RWPE1 (cell line): ENCODE measurements at regions of chr3 and their contacts with region 1.

Region 1: DNA sequence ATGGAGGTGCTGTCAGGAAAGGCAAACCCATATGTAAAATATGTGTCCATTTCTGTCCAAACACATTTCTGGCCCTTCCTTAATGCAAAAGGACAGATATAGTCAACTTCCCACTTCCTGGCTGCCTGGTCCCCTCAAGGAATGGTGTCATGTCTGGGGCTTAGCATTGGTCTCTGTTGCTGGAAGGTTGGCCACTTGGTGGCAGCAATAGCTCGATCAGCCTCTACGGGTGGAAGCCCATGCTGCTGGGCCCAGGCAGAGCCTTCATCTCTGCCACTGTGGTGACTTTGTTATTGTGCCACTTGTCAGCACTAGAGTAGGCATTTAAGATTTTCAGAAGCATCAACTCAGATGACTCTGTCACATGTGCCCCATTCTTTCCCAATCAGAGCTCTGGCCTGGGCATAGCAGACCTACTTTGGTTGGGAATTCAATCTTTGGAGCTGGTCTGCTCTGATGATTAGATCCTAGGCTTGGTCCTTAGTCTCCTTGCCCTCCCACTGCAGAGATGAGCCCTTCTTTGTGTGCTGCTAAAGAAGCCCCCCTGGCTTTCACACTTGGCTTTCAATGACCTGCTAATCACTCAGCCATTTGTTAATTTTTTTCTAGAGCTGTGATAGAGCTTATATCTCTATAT is 51.0 kb upstream of the SPSB4 start:
- DNase-seq: peak; percentile 33
- H3K27ac ChIP-seq: no peak overlapping the region
- CTCF ChIP-seq: peak; percentile 43

Region 2: DNA sequence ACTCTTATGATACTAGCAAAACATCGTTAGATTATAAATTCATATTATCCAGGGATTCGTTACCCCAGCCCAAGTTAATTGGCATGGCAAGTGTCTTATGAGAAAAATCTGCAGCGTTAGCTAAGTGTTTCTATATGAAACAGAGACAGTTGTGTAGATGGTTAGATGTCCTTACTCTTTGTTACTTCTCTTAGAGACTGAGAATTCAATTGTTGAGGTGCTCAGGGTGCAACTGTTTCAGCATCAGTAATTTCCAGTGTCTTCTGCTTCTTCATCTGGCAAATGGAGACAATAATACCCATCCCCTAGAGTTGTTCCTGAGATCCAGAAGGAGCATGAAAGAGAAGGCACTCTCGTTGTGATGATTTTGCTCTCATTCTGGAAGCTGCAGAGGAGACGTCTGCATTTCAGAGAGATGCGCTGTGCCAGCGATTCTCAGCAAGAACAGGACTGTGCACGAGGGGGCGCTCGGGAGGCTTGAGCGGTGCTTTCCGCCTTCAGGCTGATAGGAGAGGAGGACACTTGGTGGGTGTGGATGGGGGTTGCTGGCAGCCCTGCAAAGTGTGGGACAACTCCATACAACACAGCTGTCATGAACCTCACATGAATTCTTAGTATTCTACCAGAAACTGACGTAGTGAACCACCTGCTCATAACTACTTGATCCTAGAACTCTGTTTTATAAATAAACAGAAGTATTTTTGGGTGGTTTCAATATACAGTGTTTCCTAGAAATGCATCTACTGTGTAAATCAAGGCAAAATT is 11.3 kb after region 1 on chr3:
- CTCF ChIA-PET with region 1: interaction called, 12 read pairs
- POLR2A ChIA-PET with region 1: no interaction called
- DNase-seq: peak; percentile 37
- H3K27ac ChIP-seq: no peak overlapping the region
- CTCF ChIP-seq: peak; percentile 60

Region 3: GRCh38 chr3:141192345-141192744 is 192.2 kb after region 1 on chr3:
- CTCF ChIA-PET with region 1: interaction called, 20 read pairs
- POLR2A ChIA-PET with region 1: no interaction called
- DNase-seq: peak; percentile 79
- H3K27ac ChIP-seq: no peak overlapping the region
- CTCF ChIP-seq: peak; percentile 93